ENCODE measurements at regions of chr6 and their contacts with region 1.

Region 1: DNA sequence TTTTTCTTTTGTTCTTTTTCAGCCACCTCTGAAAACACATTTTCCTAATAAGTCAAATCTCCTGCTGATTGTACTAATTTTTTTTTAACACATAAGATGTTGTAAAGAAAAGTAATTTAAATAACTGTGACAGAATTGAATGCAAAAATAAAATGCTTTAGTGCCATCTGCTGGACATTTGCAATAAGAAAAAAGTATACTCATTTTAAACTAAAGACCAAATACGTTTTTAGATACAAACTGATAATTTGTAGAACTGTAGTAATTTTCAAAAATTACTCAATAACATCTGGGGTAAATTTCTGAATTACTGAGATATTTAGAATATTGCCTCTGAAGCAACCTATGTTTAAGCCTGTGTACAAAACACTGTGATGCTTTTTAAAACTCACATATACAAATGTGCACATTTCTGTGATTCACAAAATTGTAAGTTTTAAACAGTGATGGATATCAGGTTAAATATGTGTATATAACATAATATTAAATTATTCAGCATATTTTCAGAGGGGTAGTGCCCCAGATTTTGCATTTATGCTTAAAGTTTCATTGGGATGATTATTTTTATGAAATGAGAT is 198.7 kb downstream of the RIMS1 start:
- DNase-seq: no peak
- H3K4me3 ChIP-seq: no peak overlapping the region
- H3K27ac ChIP-seq: no peak overlapping the region
- H3K4me1 ChIP-seq: no peaks in the 10 kb centered on the region
- H3K27me3 ChIP-seq: no peaks in the 10 kb centered on the region
- CTCF ChIP-seq: no peak

Region 2: GRCh38 chr6:71383901-71384489 is 701.1 kb before region 1 on chr6:
- intact Hi-C with region 1: loop called (anchors 10 kb)
- DNase-seq: no peak
- H3K4me3 ChIP-seq: no peak overlapping the region
- H3K27ac ChIP-seq: no peak overlapping the region
- H3K4me1 ChIP-seq: no peaks in the 10 kb centered on the region
- H3K27me3 ChIP-seq: no peaks in the 10 kb centered on the region
- CTCF ChIP-seq: peak; percentile 46

Region 3: GRCh38 chr6:71533939-71534379 is 551.1 kb before region 1 on chr6:
- intact Hi-C with region 1: loop called (anchors 5 kb)
- DNase-seq: no peak
- H3K4me3 ChIP-seq: no peak overlapping the region
- H3K27ac ChIP-seq: no peak overlapping the region
- H3K4me1 ChIP-seq: no peaks in the 10 kb centered on the region
- H3K27me3 ChIP-seq: no peaks in the 10 kb centered on the region
- CTCF ChIP-seq: peak; percentile 50

Region 4: GRCh38 chr6:71621918-71622519 is 463.1 kb before region 1 on chr6:
- intact Hi-C with region 1: loop called (anchors 5 kb)
- DNase-seq: no peak
- H3K4me3 ChIP-seq: no peak overlapping the region
- H3K27ac ChIP-seq: no peak overlapping the region
- H3K4me1 ChIP-seq: no peaks in the 10 kb centered on the region
- H3K27me3 ChIP-seq: no peaks in the 10 kb centered on the region
- CTCF ChIP-seq: no peak

Region 5: DNA sequence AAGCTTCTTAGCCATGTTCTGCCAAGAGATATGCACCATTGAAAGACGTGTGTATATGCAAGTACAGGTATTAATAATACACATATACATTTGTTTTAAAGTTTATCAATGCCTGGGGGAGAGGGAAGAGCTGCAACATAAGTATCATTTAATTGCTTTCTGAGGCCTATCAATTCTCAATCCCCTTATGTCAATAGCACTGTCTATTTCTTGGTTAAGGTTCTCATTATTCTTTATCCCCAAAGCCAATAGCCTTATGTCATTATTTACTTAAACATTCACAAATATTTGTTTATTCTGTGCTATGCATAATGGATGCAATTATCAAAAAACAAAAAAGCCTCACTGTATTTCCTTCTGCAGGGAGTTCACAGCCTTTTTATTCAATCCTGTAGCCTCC is 186.4 kb after region 1 on chr6:
- intact Hi-C with region 1: no loop called
- DNase-seq: no peak
- H3K4me3 ChIP-seq: no peak overlapping the region
- H3K27ac ChIP-seq: no peak overlapping the region
- H3K4me1 ChIP-seq: no peaks in the 10 kb centered on the region
- H3K27me3 ChIP-seq: no peaks in the 10 kb centered on the region
- CTCF ChIP-seq: no peak

Region 6: DNA sequence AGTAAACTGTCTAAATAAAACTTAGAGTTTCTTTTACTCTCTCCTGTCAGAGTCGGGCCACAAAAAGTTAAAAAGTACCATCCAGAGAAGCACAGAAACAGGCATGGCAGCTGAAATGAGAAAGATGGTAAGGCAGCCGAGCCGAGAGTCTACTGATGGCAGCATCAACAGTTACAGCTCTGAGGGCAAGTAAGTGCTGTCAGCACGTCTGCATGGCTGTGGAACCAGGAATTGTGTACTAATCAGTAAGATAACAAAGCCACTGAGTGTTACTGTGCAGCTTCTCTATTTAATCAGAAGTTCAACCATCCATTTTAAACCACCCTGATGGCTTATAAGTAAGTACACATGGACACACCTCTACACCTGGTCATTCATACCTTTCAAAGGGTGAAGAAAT is 305.5 kb after region 1 on chr6:
- intact Hi-C with region 1: no loop called
- DNase-seq: no peak
- H3K4me3 ChIP-seq: no peak overlapping the region
- H3K27ac ChIP-seq: no peak overlapping the region
- H3K4me1 ChIP-seq: no peaks in the 10 kb centered on the region
- H3K27me3 ChIP-seq: no peaks in the 10 kb centered on the region
- CTCF ChIP-seq: no peak

Region 7: GRCh38 chr6:72873433-72873832 is 788.4 kb after region 1 on chr6:
- intact Hi-C with region 1: no loop called
- DNase-seq: no peak
- H3K4me3 ChIP-seq: no peak overlapping the region
- H3K27ac ChIP-seq: no peak overlapping the region
- H3K4me1 ChIP-seq: no peaks in the 10 kb centered on the region
- H3K27me3 ChIP-seq: no peaks in the 10 kb centered on the region
- CTCF ChIP-seq: no peak

Measured in colonic mucosa (tissue), 4 donors.